Mammary epithelial cell (primary cell): ENCODE measurements at regions of chr15 and their contacts with region 1.

Region 1: DNA sequence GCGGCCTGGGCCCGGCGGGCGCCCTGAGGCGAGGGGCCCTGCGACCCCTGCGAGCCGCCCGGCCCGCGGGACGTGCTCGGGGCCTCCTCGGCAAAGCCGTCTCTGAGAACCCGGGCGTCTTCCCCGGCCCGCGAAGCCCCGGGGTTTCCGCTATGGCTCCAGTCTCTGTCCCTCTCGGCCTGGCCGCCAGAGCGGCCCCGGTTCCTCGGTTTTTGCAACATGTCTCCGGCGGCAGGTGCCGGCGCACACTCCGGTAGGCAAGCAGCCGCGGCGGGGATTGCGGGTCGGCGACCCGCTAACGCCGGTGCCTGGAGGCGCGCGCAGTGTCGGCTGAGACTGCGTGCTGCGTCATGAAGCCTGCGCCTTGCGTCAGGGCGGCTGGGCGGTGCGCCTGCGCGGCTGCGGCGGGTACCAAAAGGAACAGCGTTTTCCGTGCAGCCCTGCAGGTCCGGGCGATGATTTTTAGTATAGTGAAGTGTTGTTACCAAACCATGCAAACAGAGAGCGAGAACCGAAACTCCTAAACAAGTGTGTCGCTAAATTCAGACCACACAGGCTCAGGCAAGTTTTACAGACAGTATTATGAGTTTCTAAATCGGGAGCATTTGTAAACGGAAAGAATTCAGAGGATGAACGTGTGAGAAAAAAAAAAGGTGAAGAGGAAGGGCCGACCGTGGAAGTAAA is at the start of gene NSMCE3:
- DNase-seq: peak; percentile 83
- H3K4me3 ChIP-seq: peak within 1 kb of the TSS; percentile 69 to 84 (median 77)
- H3K27ac ChIP-seq: peak within 1 kb of the TSS; percentile 64
- H3K4me1 ChIP-seq: peaks cover 14% of the 10 kb centered on the region
- H3K27me3 ChIP-seq: no peaks in the 10 kb centered on the region
- CTCF ChIP-seq: no peak
- total RNA-seq, gene NSMCE3: 6.5 to 10.2 TPM

Region 2: GRCh38 chr15:29139540-29140459 is 129.8 kb before region 1 on chr15:
- CTCF ChIA-PET with region 1: no interaction called
- dilution Hi-C with region 1: no loop called
- in situ Hi-C with region 1: no loop called
- intact Hi-C with region 1: loop called (anchors 10 kb)
- DNase-seq: no peak
- H3K4me3 ChIP-seq: no peak overlapping the region
- H3K27ac ChIP-seq: no peak overlapping the region
- H3K4me1 ChIP-seq: no peaks in the 10 kb centered on the region
- H3K27me3 ChIP-seq: no peaks in the 10 kb centered on the region
- CTCF ChIP-seq: no peak

Region 3: GRCh38 chr15:29289173-29289572 is 19.5 kb after region 1 on chr15:
- CTCF ChIA-PET with region 1: no interaction called
- dilution Hi-C with region 1: no loop called
- in situ Hi-C with region 1: no loop called
- intact Hi-C with region 1: no loop called
- DNase-seq: no peak
- H3K4me3 ChIP-seq: no peak overlapping the region
- H3K27ac ChIP-seq: no peak overlapping the region
- H3K4me1 ChIP-seq: no peaks in the 10 kb centered on the region
- H3K27me3 ChIP-seq: no peaks in the 10 kb centered on the region
- CTCF ChIP-seq: no peak